HCT116 (cell line): ENCODE measurements at regions of chr1 and their contacts with region 1.

Region 1: GRCh38 chr1:15152318-15153183 is 996 bp upstream of the TMEM51 start:
- DNase-seq: peak; percentile 87
- ATAC-seq: peak; percentile 49
- H3K4me3 ChIP-seq: peak overlapping the region; percentile 66 to 67
- H3K27ac ChIP-seq: peak overlapping the region; percentile 84
- H3K4me1 ChIP-seq: peaks cover 8 to 26% of the 10 kb centered on the region in 2 experiments; a peak in 3 of 4 replicates
- H3K27me3 ChIP-seq: no peaks in the 10 kb centered on the region
- CTCF ChIP-seq: peak; percentile 45 to 84 (median 64)
- POLR2A ChIP-seq: no peak
- RAD21 ChIP-seq: peak; percentile 93

Region 2: DNA sequence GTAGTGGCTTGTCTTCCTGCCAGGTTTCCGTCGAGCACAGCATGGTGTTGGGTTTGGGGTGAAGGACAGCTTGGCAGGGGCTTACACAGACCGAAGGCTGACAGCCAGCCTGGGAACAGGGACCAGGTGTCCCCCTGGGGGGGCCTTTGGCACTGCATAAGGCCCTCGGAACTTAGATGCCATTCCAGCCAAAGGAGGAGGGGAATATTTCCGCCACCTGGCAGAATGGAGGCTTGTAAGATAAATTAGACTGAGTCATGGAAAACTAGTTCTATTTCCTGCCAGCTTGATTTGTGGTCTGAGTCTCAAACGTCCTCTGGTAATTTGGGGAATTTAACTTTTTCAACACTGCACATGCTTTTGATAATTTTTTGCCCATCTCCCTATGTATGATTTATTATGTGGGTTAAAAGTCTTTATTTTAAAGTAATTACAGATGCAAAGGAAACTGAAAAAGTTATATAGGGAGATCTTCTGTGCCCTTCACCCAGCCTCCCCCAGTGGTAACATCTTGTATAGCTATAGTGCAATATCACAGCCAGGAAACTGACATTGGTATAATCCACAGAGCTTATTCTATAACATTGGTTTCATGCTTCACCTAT is 10.5 kb before region 1 on chr1:
- CTCF ChIA-PET with region 1: interaction called, 26 read pairs
- POLR2A ChIA-PET with region 1: no interaction called
- RAD21 ChIA-PET with region 1: no interaction called
- intact Hi-C with region 1: loop called (anchors 1 kb)
- DNase-seq: no peak
- ATAC-seq: peak; percentile 52
- H3K4me3 ChIP-seq: peak overlapping the region in 1 of 2 experiments; percentile 24; a peak in 1 of 4 replicates
- H3K27ac ChIP-seq: no peak overlapping the region
- H3K4me1 ChIP-seq: peaks cover 30 to 43% of the 10 kb centered on the region in 2 experiments
- H3K27me3 ChIP-seq: no peaks in the 10 kb centered on the region
- CTCF ChIP-seq: peak in 2 of 3 experiments; percentile 39 to 54; a peak in 4 of 6 replicates
- POLR2A ChIP-seq: no peak
- RAD21 ChIP-seq: no peak

Region 3: GRCh38 chr1:15178571-15179484 is 26.3 kb after region 1 on chr1:
- CTCF ChIA-PET with region 1: interaction called, 6 read pairs
- POLR2A ChIA-PET with region 1: interaction called, 4 read pairs
- RAD21 ChIA-PET with region 1: interaction called in 1 of 2 experiments, 3 read pairs
- intact Hi-C with region 1: loop called (anchors 2 kb)
- DNase-seq: peak; percentile 93
- ATAC-seq: peak; percentile 75
- H3K4me3 ChIP-seq: peak overlapping the region in 1 of 2 experiments; percentile 39; a peak in 2 of 4 replicates
- H3K27ac ChIP-seq: peak overlapping the region; percentile 86
- H3K4me1 ChIP-seq: peaks cover 73 to 78% of the 10 kb centered on the region in 2 experiments
- H3K27me3 ChIP-seq: no peaks in the 10 kb centered on the region
- CTCF ChIP-seq: no peak
- POLR2A ChIP-seq: no peak
- RAD21 ChIP-seq: no peak

Region 4: DNA sequence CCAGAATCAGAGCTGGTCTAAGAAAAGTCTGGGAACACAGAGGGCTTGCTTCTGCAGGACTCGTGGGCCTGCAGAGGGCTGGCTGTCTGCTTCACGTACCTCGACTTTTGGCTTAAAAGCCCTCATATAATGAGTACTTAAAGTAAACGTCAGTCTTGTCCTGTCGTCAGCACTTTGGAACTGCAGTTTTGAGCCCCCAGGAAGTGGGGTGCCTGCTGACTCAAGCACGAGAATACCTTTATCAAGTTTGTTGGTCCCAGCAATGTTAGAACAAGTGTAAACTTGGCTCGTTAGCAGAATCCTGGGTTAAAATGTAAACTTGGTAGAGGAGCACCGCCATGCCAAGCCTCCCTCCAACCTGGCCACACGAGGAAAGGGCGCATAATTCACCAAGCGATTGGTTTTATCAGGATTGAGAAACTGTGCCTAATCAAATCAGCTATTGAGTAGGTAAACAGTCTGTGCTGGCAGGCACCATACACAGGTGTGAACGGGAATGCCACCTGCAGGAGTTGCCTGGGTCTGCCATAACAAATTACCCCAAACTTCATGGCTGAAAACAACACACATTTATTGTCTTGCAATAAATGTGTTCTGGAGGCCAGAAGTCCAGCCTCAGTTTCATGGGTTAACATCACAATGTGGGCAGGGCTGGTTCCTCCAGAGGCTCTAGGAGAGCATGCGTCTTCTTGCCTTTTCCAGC is 49.4 kb after region 1 on chr1:
- CTCF ChIA-PET with region 1: interaction called, 8 read pairs
- POLR2A ChIA-PET with region 1: interaction called, 3 read pairs
- RAD21 ChIA-PET with region 1: interaction called in 1 of 2 experiments, 3 read pairs
- intact Hi-C with region 1: loop called (anchors 5 kb)
- DNase-seq: no peak
- ATAC-seq: no peak
- H3K4me3 ChIP-seq: no peak overlapping the region
- H3K27ac ChIP-seq: no peak overlapping the region
- H3K4me1 ChIP-seq: peaks cover 37 to 84% of the 10 kb centered on the region in 2 experiments
- H3K27me3 ChIP-seq: no peaks in the 10 kb centered on the region
- CTCF ChIP-seq: no peak
- POLR2A ChIP-seq: no peak
- RAD21 ChIP-seq: no peak

Region 5: DNA sequence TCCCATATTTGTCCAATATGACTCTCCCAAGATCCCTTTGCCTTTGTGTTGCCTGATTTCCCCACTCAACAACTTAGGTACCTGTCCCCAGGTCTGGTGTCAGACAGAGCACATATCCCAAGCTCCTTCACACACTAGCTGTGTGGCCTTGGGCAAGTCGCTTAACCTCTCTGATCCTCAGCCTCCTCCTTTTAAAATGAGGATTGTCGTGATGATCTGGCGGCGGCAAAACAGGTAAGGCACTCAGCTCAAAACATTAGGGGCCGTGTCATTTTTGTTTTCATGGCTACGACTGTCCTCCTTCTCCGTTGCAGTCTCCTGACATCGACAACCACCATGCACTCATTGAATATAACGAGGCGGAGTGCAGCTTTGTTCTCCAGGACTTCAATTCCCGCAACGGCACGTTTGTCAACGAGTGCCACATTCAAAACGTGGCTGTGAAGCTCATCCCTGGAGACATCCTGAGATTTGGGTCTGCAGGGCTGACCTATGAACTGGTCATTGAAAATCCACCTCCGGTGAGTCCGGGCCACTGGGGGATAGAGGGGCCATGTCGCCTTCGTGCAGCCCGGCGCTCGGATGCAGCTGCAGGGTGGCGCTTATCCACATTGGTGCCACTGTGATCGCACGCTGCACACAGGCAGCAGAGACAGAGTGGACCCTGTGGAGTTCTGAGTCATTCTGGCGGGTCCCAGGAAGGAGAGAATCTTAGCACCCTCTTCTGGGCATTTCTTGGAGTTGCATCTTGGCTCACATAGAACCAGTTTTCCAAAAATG is 119.6 kb after region 1 on chr1:
- CTCF ChIA-PET with region 1: interaction called, 4 read pairs
- POLR2A ChIA-PET with region 1: no interaction called
- RAD21 ChIA-PET with region 1: interaction called in 1 of 2 experiments, 4 read pairs
- intact Hi-C with region 1: loop called (anchors 1 kb)
- DNase-seq: peak; percentile 66
- ATAC-seq: peak; percentile 97
- H3K4me3 ChIP-seq: no peak overlapping the region
- H3K27ac ChIP-seq: no peak overlapping the region
- H3K4me1 ChIP-seq: peaks cover 0 to 13% of the 10 kb centered on the region in 2 experiments; a peak in 2 of 4 replicates
- H3K27me3 ChIP-seq: no peaks in the 10 kb centered on the region
- CTCF ChIP-seq: peak; percentile 81 to 94 (median 84)
- POLR2A ChIP-seq: no peak
- RAD21 ChIP-seq: peak; percentile 99

Region 6: GRCh38 chr1:15329104-15329820 is 176.7 kb after region 1 on chr1:
- CTCF ChIA-PET with region 1: no interaction called
- POLR2A ChIA-PET with region 1: no interaction called
- RAD21 ChIA-PET with region 1: no interaction called
- intact Hi-C with region 1: no loop called
- DNase-seq: no peak
- ATAC-seq: no peak
- H3K4me3 ChIP-seq: no peak overlapping the region
- H3K27ac ChIP-seq: no peak overlapping the region
- H3K4me1 ChIP-seq: peaks cover 0 to 13% of the 10 kb centered on the region in 2 experiments; a peak in 2 of 4 replicates
- H3K27me3 ChIP-seq: no peaks in the 10 kb centered on the region
- CTCF ChIP-seq: no peak
- POLR2A ChIP-seq: no peak
- RAD21 ChIP-seq: no peak